Activated B cell treated with CpG ODN at 0.5 μM for 24 hours (primary cell): ENCODE measurements at regions of chr16 and their contacts with region 1.

Region 1: GRCh38 chr16:83807710-83808572 is at the start of gene HSBP1:
- DNase-seq: peak; percentile 87
- ATAC-seq: peak; percentile 95
- H3K4me3 Mint-ChIP-seq: peak within 1 kb of the TSS; percentile 97
- H3K27ac Mint-ChIP-seq: peak within 1 kb of the TSS; percentile 94
- H3K4me1 Mint-ChIP-seq: peaks cover 64% of the 10 kb centered on the region
- H3K27me3 Mint-ChIP-seq: no peaks in the 10 kb centered on the region
- CTCF ChIP-seq: no peak
- total RNA-seq, gene HSBP1: 49.8 and 54.0 TPM in 2 replicates

Region 2: GRCh38 chr16:83769397-83770008 is 38.4 kb before region 1 on chr16:
- CTCF ChIA-PET with region 1: no interaction called
- POLR2A ChIA-PET with region 1: interaction called, 9 read pairs
- intact Hi-C with region 1: loop called (anchors 2 kb)
- DNase-seq: no peak
- ATAC-seq: peak; percentile 91
- H3K4me3 Mint-ChIP-seq: peak overlapping the region; percentile 61
- H3K27ac Mint-ChIP-seq: peak overlapping the region; percentile 84
- H3K4me1 Mint-ChIP-seq: peaks cover 21% of the 10 kb centered on the region
- H3K27me3 Mint-ChIP-seq: no peaks in the 10 kb centered on the region
- CTCF ChIP-seq: no peak

Region 3: DNA sequence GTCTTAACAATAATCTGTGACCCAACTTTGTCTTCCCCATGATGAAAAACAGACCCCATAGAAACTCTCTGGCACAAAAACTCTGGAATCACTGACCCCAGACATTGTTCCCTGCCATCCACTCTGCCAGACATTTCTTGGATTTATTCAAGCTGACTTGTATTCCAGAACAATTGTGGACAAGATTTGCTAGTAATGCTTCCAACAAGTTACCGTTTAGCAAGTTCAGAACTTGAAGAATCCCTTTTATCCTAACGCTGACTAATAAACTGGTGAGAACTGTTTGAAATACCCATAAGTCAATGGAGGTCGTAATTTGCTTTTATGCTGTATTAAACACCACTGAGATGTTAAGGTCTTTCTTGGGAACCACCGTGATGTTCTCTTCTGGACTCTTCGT is 10.3 kb after region 1 on chr16:
- CTCF ChIA-PET with region 1: no interaction called
- POLR2A ChIA-PET with region 1: no interaction called
- intact Hi-C with region 1: no loop called
- DNase-seq: no peak
- ATAC-seq: no peak
- H3K4me3 Mint-ChIP-seq: no peak overlapping the region
- H3K27ac Mint-ChIP-seq: no peak overlapping the region
- H3K4me1 Mint-ChIP-seq: peaks cover 5% of the 10 kb centered on the region
- H3K27me3 Mint-ChIP-seq: peaks cover 3% of the 10 kb centered on the region
- CTCF ChIP-seq: no peak

Region 4: DNA sequence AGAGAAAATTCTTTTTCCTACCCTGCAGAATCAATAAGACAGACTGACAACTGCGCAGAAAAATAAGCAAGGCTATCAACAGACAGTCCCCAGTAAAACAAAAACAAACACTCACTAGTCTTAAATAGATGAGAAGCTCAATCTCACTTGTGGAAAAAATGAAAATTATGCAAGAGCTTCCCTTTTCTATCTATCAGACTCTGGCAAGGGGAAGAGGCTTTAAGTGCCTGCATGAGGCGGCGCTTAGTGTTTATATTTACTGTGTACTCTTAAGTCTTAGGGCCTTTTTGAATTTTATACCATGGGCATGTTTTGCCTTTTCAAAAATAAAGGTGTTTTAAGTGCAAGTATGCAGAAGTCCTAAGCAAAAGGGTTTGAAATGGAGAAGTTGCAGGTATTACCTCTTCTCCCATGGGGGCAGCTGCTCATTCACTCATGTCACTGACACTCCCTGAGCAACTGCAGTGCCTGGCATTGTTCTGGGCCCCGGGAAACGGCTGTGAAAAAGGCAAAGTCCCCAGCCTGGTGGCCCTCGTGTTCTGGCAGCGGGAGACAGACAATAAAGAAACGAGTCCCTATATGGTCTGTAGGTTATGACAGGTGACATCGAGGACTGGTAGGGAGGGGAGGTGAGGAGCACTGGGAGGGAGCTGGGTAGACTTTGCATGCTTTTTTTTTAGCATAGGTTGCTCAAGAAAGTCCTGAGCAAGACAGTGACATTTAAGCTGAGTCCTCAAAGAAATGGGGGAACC is 35.0 kb after region 1 on chr16:
- CTCF ChIA-PET with region 1: no interaction called
- POLR2A ChIA-PET with region 1: interaction called, 11 read pairs
- intact Hi-C with region 1: no loop called
- DNase-seq: peak; percentile 35
- ATAC-seq: peak; percentile 89
- H3K4me3 Mint-ChIP-seq: peak overlapping the region; percentile 76
- H3K27ac Mint-ChIP-seq: peak overlapping the region; percentile 78
- H3K4me1 Mint-ChIP-seq: peaks cover 48% of the 10 kb centered on the region
- H3K27me3 Mint-ChIP-seq: peaks cover 7% of the 10 kb centered on the region
- CTCF ChIP-seq: no peak

Region 5: GRCh38 chr16:84144859-84145639 is 337.1 kb after region 1 on chr16 and contains the starts of genes DNAAF1 and HSDL1:
- CTCF ChIA-PET with region 1: no interaction called
- POLR2A ChIA-PET with region 1: no interaction called
- intact Hi-C with region 1: loop called (anchors 1 kb)
- DNase-seq: peak; percentile 97
- ATAC-seq: peak; percentile 86
- H3K4me3 Mint-ChIP-seq: peak within 1 kb of the TSS; percentile 93
- H3K27ac Mint-ChIP-seq: peak within 1 kb of the TSS; percentile 77
- H3K4me1 Mint-ChIP-seq: peaks cover 12% of the 10 kb centered on the region
- H3K27me3 Mint-ChIP-seq: peaks cover 3% of the 10 kb centered on the region
- CTCF ChIP-seq: no peak
- total RNA-seq, gene DNAAF1: not detected in 2 replicates
- total RNA-seq, gene HSDL1: 13.1 and 15.3 TPM in 2 replicates